GM12878 (cell line): ENCODE measurements at regions of chr2 and their contacts with region 1.

Region 1: DNA sequence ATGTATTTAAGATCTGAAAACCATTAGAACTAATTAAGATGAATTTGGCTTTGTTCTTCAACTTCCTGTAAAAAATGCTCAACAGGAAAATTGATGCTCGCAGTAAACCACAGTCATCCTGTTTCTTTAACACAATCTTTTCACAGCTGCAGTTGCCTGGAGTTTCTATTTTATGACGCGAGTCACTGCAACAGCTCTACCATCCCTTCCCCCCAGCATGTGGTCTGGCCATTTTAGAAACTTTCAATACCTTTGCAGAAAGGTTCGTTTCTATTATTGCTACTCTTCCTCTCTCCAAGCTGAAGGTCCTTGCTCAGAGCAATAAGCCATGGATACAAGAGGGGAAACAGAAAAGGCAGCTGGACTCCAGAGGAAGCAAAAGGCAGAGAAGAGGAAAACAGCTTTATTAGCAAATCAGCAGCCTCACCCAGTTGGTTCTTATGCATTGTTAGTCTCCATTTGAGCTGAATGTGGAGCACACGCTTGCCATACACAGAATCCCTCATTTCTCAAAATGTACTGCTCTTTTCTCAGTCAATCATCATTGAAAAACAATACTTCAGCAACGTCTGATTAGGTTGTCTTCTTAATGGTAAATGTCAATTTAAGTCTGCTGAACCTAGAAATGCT is 3.9 kb downstream of the WIPF1 start:
- DNase-seq: peak; percentile 90
- ATAC-seq: peak; percentile 65
- H3K4me3 ChIP-seq: peak overlapping the region; percentile 58
- H3K27ac ChIP-seq: peak overlapping the region; percentile 95
- H3K4me1 ChIP-seq: peaks cover 20% of the 10 kb centered on the region
- H3K27me3 ChIP-seq: no peaks in the 10 kb centered on the region
- CTCF ChIP-seq: no peak
- EP300 ChIP-seq: peak; percentile 88 to 96
- POLR2A ChIP-seq: peak; percentile 53
- RAD21 ChIP-seq: no peak

Region 2: DNA sequence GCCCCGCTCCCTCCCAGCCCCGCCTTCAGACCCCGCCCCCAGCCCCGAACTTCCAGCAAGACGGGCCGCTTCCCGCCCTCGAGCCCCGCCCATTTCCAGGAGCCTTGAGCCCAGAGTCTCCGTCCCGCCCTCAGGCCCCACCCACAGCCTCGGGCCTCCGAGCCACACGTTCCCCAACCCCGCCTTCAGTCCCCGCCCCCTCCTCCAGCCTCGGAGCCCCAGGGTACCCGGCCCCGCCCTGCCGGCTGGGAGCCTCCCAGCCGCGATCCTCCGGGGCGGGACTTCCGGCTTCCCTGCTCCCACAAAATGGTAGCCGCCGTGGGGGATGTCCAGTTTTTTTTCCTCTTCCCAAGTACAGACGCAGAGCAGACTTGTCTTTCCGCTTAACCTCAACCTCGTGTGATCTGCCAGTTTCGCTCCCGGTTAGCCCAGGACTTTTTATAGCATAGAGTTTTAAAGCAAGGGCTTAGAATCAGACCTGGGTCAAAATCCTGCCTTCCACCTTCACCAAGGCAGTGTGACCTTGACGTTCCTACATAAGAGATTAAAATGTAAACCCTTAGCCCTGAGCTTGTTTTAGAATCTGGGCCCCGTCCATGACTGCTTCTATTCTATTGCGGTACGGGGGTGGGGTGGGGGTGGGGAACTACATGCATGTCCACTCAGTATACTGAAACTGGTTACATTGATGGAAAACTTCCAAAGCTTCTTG is 106.4 kb before region 1 on chr2:
- CTCF ChIA-PET with region 1: interaction called, 11 read pairs
- POLR2A ChIA-PET with region 1: interaction called, 10 read pairs
- RAD21 ChIA-PET with region 1: interaction called, 15 read pairs
- SMC1A ChIA-PET with region 1: interaction called, 4 read pairs
- in situ Hi-C with region 1: no loop called
- intact Hi-C with region 1: loop called (anchors 5 kb)
- DNase-seq: peak; percentile 85
- ATAC-seq: peak; percentile 96
- H3K4me3 ChIP-seq: peak overlapping the region; percentile 81
- H3K27ac ChIP-seq: peak overlapping the region; percentile 85
- H3K4me1 ChIP-seq: peaks cover 9% of the 10 kb centered on the region
- H3K27me3 ChIP-seq: no peaks in the 10 kb centered on the region
- CTCF ChIP-seq: no peak
- EP300 ChIP-seq: no peak
- POLR2A ChIP-seq: peak; percentile 55
- RAD21 ChIP-seq: no peak

Region 3: DNA sequence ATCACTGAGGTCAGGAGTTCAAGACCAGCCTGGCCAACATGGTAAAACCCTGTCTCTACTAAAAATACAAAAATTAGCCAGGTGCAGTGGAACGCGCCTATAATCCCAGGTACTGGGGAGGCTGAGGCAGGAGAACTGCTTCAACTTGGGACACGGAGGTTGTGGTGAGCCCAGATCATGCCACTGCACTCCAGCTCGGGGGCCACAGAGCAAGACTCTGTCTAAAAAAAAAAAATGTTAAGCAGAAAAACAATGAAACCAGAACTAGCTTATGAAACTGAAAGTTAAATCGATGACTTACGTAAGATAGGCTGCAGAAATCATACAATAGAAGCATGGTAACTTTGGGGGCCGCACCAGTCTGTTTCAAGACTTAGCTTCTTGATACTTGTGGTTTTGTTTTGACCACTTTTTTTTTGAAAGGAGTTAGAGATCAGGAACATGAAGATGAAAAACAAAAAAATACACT is 100.7 kb before region 1 on chr2:
- CTCF ChIA-PET with region 1: interaction called, 11 read pairs
- POLR2A ChIA-PET with region 1: interaction called, 10 read pairs
- RAD21 ChIA-PET with region 1: interaction called, 15 read pairs
- SMC1A ChIA-PET with region 1: interaction called, 19 read pairs
- in situ Hi-C with region 1: no loop called
- intact Hi-C with region 1: loop called (anchors 5 kb)
- DNase-seq: peak; percentile 85
- ATAC-seq: peak; percentile 94
- H3K4me3 ChIP-seq: peak overlapping the region; percentile 41
- H3K27ac ChIP-seq: peak overlapping the region; percentile 87
- H3K4me1 ChIP-seq: peaks cover 17% of the 10 kb centered on the region; the same call in 1 of the 2 replicates
- H3K27me3 ChIP-seq: no peaks in the 10 kb centered on the region
- CTCF ChIP-seq: no peak
- EP300 ChIP-seq: peak; percentile 33 to 65; a peak in 2 of 4 replicates
- POLR2A ChIP-seq: no peak
- RAD21 ChIP-seq: no peak

Region 4: DNA sequence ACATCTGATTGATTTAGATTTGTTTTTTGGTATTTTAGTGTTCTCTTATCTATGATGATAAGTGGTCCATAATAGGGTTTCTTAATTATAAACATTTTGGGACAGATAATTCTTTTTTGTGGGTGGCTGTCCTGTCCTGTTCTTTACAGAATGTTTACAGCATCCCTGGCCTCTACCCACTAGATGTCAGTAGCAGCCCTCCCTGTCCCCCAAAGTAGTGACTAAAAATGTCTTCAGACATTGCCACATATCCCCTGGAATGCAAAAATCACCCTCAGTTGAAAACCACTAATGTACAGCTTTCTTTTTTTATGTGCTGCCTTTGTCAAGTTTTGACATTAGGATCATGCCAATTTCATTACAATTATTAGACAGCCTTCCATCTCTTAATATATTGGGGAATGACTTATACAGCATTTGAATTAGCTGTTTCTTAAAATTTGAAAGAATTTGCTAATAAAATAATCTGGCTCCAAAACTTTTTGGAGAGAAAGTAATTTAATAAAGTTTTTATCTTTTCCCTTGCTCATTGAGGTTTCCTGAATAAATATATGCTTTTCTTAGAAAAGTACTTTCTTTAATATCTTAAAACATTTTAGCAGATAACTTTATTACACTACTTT is 15.6 kb before region 1 on chr2:
- CTCF ChIA-PET with region 1: interaction called, 261 read pairs
- POLR2A ChIA-PET with region 1: interaction called, 10 read pairs
- RAD21 ChIA-PET with region 1: interaction called, 159 read pairs
- SMC1A ChIA-PET with region 1: interaction called, 193 read pairs
- in situ Hi-C with region 1: no loop called
- intact Hi-C with region 1: no loop called
- DNase-seq: no peak
- ATAC-seq: peak; percentile 71
- H3K4me3 ChIP-seq: no peak overlapping the region
- H3K27ac ChIP-seq: no peak overlapping the region
- H3K4me1 ChIP-seq: peaks cover 7% of the 10 kb centered on the region
- H3K27me3 ChIP-seq: no peaks in the 10 kb centered on the region
- CTCF ChIP-seq: peak; percentile 60 to 77 (median 64); a peak in 5 of 6 replicates
- EP300 ChIP-seq: no peak
- POLR2A ChIP-seq: no peak
- RAD21 ChIP-seq: peak; percentile 88

Region 5: DNA sequence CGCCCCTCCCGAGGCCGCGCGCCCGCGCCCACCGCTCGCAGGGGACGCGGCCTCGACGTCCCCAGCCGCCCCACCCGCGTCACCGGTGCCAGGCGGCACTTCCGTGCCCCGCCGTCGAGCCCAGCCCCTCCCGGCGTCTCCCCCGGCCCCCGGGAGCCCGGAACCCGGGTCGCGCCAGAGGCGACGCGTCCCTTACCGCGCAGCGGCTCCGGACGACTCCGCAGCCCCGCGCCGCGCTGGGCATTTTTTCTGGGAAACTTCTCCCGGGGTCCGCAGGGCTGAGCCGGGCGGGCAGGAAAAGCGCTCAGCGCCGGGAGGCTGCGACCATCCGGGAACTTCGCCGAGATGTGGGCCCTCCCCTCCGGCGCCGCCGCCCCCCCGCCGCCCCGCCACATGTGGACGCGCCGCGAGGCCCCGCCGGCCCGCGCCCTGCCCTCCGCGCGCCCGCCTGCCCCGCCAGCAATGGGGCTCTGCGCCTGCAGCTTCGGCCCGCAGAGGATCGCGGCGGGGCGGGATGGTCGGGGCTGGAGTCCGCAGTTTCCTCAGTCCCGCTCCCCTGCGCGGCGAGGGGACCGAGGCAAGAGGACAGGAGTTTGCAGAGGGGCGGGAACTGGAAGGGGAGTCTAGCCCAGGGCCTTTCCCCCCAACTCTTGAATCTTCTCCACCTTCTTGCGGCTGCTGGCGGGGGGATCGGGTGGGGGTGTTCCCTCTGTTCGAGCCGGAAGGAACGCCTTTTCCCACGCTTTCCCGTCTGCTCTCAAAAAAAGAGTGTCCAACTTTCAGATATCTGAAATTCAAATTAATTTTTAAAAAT is 89.1 kb after region 1 on chr2:
- CTCF ChIA-PET with region 1: interaction called, 534 read pairs
- POLR2A ChIA-PET with region 1: interaction called, 17 read pairs
- RAD21 ChIA-PET with region 1: interaction called, 294 read pairs
- SMC1A ChIA-PET with region 1: interaction called, 537 read pairs
- in situ Hi-C with region 1: loop called (anchors 25 kb)
- intact Hi-C with region 1: loop called (anchors 2 kb)
- DNase-seq: no peak
- ATAC-seq: peak; percentile 66
- H3K4me3 ChIP-seq: peak overlapping the region; percentile 79
- H3K27ac ChIP-seq: no peak overlapping the region
- H3K4me1 ChIP-seq: peaks cover 4% of the 10 kb centered on the region; the same call in 1 of the 2 replicates
- H3K27me3 ChIP-seq: peaks cover 0 to 2% of the 10 kb centered on the region in 2 experiments; a peak in 2 of 4 replicates
- CTCF ChIP-seq: no peak
- EP300 ChIP-seq: no peak
- POLR2A ChIP-seq: no peak
- RAD21 ChIP-seq: no peak